PC-9 (cell line): ENCODE measurements at regions of chr1 and their contacts with region 1.

Region 1: GRCh38 chr1:202835548-202836090 is 24.9 kb downstream of the PCAT6 start:
- DNase-seq: no peak
- H3K4me3 ChIP-seq: no peak overlapping the region
- H3K27ac ChIP-seq: 0 out of 2 replicates have a peak overlapping the region, but pooled peaks have one; percentile 3
- H3K4me1 ChIP-seq: peaks cover 39% of the 10 kb centered on the region
- H3K27me3 ChIP-seq: no peaks in the 10 kb centered on the region
- CTCF ChIP-seq: no peak

Region 2: DNA sequence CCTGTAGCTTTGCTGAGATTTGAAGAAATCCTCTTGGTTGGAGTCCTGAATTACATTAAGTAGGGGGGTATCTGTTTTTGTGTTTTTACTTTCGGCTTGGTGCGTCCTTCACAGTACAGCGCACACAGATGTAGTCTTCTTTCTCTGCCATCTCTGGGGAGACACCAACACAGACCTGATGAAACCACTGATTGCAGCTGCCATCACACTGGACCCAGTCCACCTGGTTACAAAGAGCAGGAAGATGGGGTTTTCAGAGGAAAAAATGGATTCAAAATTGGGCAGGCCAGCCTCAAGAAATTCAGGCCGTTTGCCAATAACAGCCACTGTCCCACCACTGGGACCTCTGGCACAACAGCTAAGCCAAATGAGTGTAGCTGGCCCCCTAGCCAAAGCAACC is 106.7 kb before region 1 on chr1:
- CTCF ChIA-PET with region 1: no interaction called
- POLR2A ChIA-PET with region 1: no interaction called
- intact Hi-C with region 1: no loop called
- DNase-seq: no peak
- H3K4me3 ChIP-seq: no peak overlapping the region
- H3K27ac ChIP-seq: no peak overlapping the region
- H3K4me1 ChIP-seq: no peaks in the 10 kb centered on the region
- H3K27me3 ChIP-seq: no peaks in the 10 kb centered on the region
- CTCF ChIP-seq: no peak

Region 3: DNA sequence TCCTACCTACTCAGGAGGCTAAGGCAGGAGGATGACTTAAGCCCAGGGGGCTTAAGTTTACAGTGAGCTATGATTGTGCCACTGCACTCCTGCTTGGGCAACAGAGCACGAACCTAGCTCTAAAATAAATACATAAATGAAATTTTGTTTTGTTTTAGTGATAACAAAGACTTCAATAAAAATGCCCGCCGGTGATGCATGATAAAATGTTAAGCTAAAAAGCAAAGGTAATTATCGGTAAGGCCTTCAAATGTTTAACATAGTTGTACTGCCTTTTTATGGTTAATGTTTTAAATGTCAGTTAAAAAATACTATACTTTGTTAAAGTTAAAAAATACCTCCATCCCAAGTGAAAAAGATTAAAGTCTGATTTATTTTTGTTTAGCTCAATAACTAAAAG is 54.4 kb before region 1 on chr1:
- CTCF ChIA-PET with region 1: no interaction called
- POLR2A ChIA-PET with region 1: interaction called, 24 read pairs
- intact Hi-C with region 1: no loop called
- DNase-seq: no peak
- H3K4me3 ChIP-seq: no peak overlapping the region
- H3K27ac ChIP-seq: 0 out of 2 replicates have a peak overlapping the region, but pooled peaks have one; percentile 0
- H3K4me1 ChIP-seq: no peaks in the 10 kb centered on the region
- H3K27me3 ChIP-seq: no peaks in the 10 kb centered on the region
- CTCF ChIP-seq: no peak

Region 4: DNA sequence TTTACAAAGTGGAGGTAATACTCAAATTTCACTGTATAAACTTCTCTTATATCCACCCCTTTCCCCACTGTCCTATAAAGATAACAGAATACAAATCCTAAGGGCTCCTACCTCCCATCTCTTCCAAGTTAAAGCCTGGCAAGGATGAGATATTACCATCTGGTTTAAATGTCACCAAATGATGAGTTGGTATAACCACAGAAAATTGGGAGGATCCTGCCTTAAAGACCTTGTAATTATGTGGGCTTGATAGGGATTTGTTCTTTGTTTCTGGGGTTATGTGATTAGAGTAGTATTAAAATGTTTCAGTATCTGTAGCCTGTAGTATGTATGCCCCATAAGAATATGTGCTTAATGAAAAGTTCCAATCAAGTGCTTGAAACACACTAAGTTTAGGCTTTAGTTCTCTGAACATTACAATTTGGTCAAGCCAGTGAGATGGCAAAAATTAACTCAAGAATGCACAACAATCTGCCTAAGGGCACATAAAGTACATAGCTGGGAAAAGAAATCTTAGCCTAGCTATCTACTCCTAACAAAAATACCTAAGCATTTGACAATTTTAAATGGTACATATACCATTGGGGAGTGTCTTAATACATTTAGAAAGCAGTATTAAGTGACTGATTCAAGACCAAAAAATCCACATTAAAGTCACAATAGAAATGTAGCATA is 41.4 kb before region 1 on chr1:
- CTCF ChIA-PET with region 1: no interaction called
- POLR2A ChIA-PET with region 1: interaction called, 10 read pairs
- intact Hi-C with region 1: no loop called
- DNase-seq: peak in 1 of 2 experiments; percentile 48
- H3K4me3 ChIP-seq: no peak overlapping the region
- H3K27ac ChIP-seq: peak overlapping the region; percentile 29; the same call in 1 of the 2 replicates
- H3K4me1 ChIP-seq: peaks cover 28% of the 10 kb centered on the region
- H3K27me3 ChIP-seq: no peaks in the 10 kb centered on the region
- CTCF ChIP-seq: no peak